A549 (cell line): ENCODE measurements at regions of chr12 and their contacts with region 1.

Region 1: GRCh38 chr12:57182921-57183790 is 33.4 kb upstream of the NXPH4 start:
- DNase-seq: peak; percentile 73 to 94
- ATAC-seq: peak; percentile 79 to 95
- H3K4me3 ChIP-seq: no peak overlapping the region
- H3K27ac ChIP-seq: no peak overlapping the region
- H3K4me1 ChIP-seq: no peaks in the 10 kb centered on the region
- CTCF ChIP-seq: peak; percentile 85
- EP300 ChIP-seq: no peak
- POLR2A ChIP-seq: no peak
- RAD21 ChIP-seq: peak; percentile 91

Region 2: DNA sequence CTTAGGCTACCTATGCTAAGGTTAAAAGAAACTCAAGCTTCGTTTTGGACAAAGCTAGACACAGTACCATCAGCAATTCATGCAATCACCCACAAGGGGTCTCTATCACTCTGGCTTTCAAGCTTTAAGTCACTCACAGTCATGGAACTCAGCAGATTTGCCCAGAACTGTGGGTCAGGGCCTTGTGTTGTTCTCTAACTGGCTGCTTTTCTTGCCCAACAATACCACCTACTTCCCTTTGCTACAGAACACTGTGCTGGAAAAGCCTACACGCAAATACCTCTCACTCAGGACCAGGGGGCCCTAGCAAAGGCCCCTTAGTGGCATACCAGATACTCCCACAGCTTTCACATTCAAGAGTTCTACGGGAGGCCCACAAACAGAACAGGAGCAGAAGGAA is 113.6 kb before region 1 on chr12:
- CTCF ChIA-PET with region 1: interaction called, 44 read pairs
- POLR2A ChIA-PET with region 1: no interaction called
- DNase-seq: peak; percentile 48 to 86
- ATAC-seq: peak; percentile 99
- H3K4me3 ChIP-seq: no peak overlapping the region
- H3K27ac ChIP-seq: peak overlapping the region in 1 of 2 experiments; percentile 68; a peak in 3 of 6 replicates
- H3K4me1 ChIP-seq: 0 out of 3 replicates have a peak, but pooled peaks cover 4% of the 10 kb centered on the region
- CTCF ChIP-seq: peak; percentile 94
- EP300 ChIP-seq: no peak
- POLR2A ChIP-seq: no peak
- RAD21 ChIP-seq: peak; percentile 94 to 97

Region 3: GRCh38 chr12:57101844-57102695 is 81.1 kb before region 1 on chr12:
- CTCF ChIA-PET with region 1: interaction called, 10 read pairs
- POLR2A ChIA-PET with region 1: no interaction called
- DNase-seq: peak; percentile 66 to 74
- ATAC-seq: peak; percentile 58 to 65
- H3K4me3 ChIP-seq: no peak overlapping the region
- H3K27ac ChIP-seq: peak overlapping the region; percentile 13 to 68; a peak in 4 of 6 replicates
- H3K4me1 ChIP-seq: peaks cover 19% of the 10 kb centered on the region
- CTCF ChIP-seq: no peak
- EP300 ChIP-seq: no peak
- POLR2A ChIP-seq: no peak
- RAD21 ChIP-seq: no peak

Region 4: GRCh38 chr12:57151741-57152630 is 31.2 kb before region 1 on chr12:
- CTCF ChIA-PET with region 1: interaction called, 14 read pairs
- POLR2A ChIA-PET with region 1: no interaction called
- DNase-seq: no peak
- ATAC-seq: peak in 1 of 2 experiments; percentile 12; a peak in 1 of 6 replicates
- H3K4me3 ChIP-seq: no peak overlapping the region
- H3K27ac ChIP-seq: no peak overlapping the region
- H3K4me1 ChIP-seq: peaks cover 24% of the 10 kb centered on the region
- CTCF ChIP-seq: no peak
- EP300 ChIP-seq: no peak
- POLR2A ChIP-seq: no peak
- RAD21 ChIP-seq: no peak

Region 5: GRCh38 chr12:57213058-57213715 is 30.0 kb after region 1 on chr12:
- CTCF ChIA-PET with region 1: interaction called, 57 read pairs
- POLR2A ChIA-PET with region 1: no interaction called
- DNase-seq: peak; percentile 89 to 94
- ATAC-seq: peak; percentile 51 to 75
- H3K4me3 ChIP-seq: no peak overlapping the region
- H3K27ac ChIP-seq: peak overlapping the region in 1 of 2 experiments; percentile 67; a peak in 4 of 6 replicates
- H3K4me1 ChIP-seq: peaks cover 31% of the 10 kb centered on the region
- CTCF ChIP-seq: peak; percentile 90
- EP300 ChIP-seq: no peak
- POLR2A ChIP-seq: no peak
- RAD21 ChIP-seq: peak; percentile 78 to 85

Region 6: GRCh38 chr12:57415088-57415487 is 231.9 kb after region 1 on chr12:
- CTCF ChIA-PET with region 1: no interaction called
- POLR2A ChIA-PET with region 1: no interaction called
- DNase-seq: no peak
- ATAC-seq: no peak
- H3K4me3 ChIP-seq: no peak overlapping the region
- H3K27ac ChIP-seq: no peak overlapping the region
- H3K4me1 ChIP-seq: peaks cover 15% of the 10 kb centered on the region
- CTCF ChIP-seq: no peak
- EP300 ChIP-seq: no peak
- POLR2A ChIP-seq: no peak
- RAD21 ChIP-seq: no peak